Calu3 (cell line): ENCODE measurements at regions of chr6 and their contacts with region 1.

Region 1: DNA sequence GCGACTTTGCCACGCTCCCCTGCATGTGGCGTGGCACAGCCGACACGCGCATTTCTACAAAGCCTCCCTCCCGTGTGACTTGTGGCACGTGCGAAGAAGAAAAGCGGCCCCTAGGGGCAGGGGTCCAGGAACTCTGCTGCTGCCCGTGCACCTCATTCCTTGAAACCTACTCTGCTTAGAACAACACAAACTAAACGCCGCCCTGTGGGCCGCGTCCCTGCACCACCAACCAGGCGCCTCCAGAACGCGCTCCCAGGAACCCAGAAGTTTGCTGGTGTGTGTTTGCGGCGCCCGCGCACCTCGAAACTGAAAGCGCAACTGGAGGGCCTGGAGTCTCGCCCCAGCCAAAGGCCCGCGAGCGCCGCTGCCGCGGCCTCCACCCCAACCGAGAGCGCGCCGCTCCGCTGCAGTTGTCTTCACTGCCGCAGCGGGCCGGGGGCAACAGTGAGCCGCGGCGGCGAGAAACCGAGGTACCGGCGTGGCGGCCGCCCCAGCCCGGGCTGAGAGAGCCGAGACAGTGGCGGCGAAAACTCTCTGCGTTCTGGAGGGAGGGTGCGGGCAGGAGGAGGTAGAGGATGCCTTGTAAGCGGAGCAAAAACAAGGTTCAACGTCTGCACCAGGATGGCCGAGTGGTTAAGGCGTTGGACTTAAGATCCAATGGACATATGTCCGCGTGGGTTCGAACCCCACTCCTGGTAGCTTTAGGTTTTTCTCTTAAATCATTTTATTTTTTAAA is 65.8 kb downstream of the STX11 start:
- DNase-seq: peak; percentile 89
- H3K4me3 Mint-ChIP-seq: peak overlapping the region; percentile 80
- H3K27ac Mint-ChIP-seq: peak overlapping the region; percentile 99
- H3K4me1 Mint-ChIP-seq: peaks cover 16% of the 10 kb centered on the region
- H3K27me3 Mint-ChIP-seq: peaks cover under 1% of the 10 kb centered on the region
- CTCF ChIP-seq: peak; percentile 52

Region 2: DNA sequence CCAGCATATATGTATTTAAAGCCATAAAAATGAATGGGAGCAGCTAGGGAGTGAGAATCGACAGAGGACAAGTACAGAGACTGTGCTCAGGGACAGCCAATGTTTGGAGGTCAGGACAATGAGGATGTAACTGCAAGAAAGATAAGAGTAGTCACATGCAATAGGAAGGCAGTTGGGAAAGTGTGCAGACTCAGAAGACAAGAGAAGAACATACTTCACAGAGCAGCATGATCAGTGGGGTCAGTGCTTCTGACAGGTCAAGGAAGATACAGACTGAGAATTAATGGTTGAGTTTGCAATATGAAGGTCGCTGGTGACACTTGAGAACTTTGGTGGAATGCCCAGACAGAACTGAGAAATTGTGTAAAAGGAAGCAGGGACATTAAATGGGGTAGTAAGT is 233.1 kb before region 1 on chr6:
- CTCF ChIA-PET with region 1: no interaction called
- intact Hi-C with region 1: no loop called
- DNase-seq: no peak
- H3K4me3 Mint-ChIP-seq: no peak overlapping the region
- H3K27ac Mint-ChIP-seq: no peak overlapping the region
- H3K4me1 Mint-ChIP-seq: no peaks in the 10 kb centered on the region
- H3K27me3 Mint-ChIP-seq: no peaks in the 10 kb centered on the region
- CTCF ChIP-seq: no peak

Region 3: GRCh38 chr6:144265390-144265789 is 49.3 kb after region 1 on chr6:
- CTCF ChIA-PET with region 1: no interaction called
- intact Hi-C with region 1: loop called (anchors 1 kb)
- DNase-seq: peak; percentile 24
- H3K4me3 Mint-ChIP-seq: no peak overlapping the region
- H3K27ac Mint-ChIP-seq: peak overlapping the region; percentile 85
- H3K4me1 Mint-ChIP-seq: peaks cover 10% of the 10 kb centered on the region
- H3K27me3 Mint-ChIP-seq: no peaks in the 10 kb centered on the region
- CTCF ChIP-seq: no peak